A549 (cell line): ENCODE measurements at regions of chr17 and their contacts with region 1.

Region 1: GRCh38 chr17:27760069-27760885 is 40.1 kb downstream of the NOS2 start:
- DNase-seq: peak; percentile 45 to 58
- ATAC-seq: peak; percentile 44 to 82; a peak in 5 of 6 replicates
- H3K4me3 ChIP-seq: no peak overlapping the region
- H3K27ac ChIP-seq: no peak overlapping the region
- H3K4me1 ChIP-seq: no peaks in the 10 kb centered on the region
- CTCF ChIP-seq: peak; percentile 97
- EP300 ChIP-seq: no peak
- POLR2A ChIP-seq: no peak
- RAD21 ChIP-seq: peak; percentile 75 to 80

Region 2: GRCh38 chr17:27654654-27655524 is 105.4 kb before region 1 on chr17:
- CTCF ChIA-PET with region 1: interaction called, 500 read pairs
- POLR2A ChIA-PET with region 1: no interaction called
- DNase-seq: peak; percentile 92 to 94
- ATAC-seq: peak; percentile 79 to 97
- H3K4me3 ChIP-seq: no peak overlapping the region
- H3K27ac ChIP-seq: peak overlapping the region in 1 of 2 experiments; percentile 35; a peak in 1 of 6 replicates
- H3K4me1 ChIP-seq: no peaks in the 10 kb centered on the region
- CTCF ChIP-seq: peak; percentile 100
- EP300 ChIP-seq: no peak
- POLR2A ChIP-seq: no peak
- RAD21 ChIP-seq: peak; percentile 68 to 88

Region 3: GRCh38 chr17:27733773-27734172 is 26.5 kb before region 1 on chr17:
- CTCF ChIA-PET with region 1: interaction called, 23 read pairs
- POLR2A ChIA-PET with region 1: no interaction called
- DNase-seq: peak in 1 of 2 experiments; percentile 14
- ATAC-seq: peak in 1 of 2 experiments; percentile 48; a peak in 1 of 6 replicates
- H3K4me3 ChIP-seq: no peak overlapping the region
- H3K27ac ChIP-seq: no peak overlapping the region
- H3K4me1 ChIP-seq: no peaks in the 10 kb centered on the region
- CTCF ChIP-seq: no peak
- EP300 ChIP-seq: no peak
- POLR2A ChIP-seq: no peak
- RAD21 ChIP-seq: no peak

Region 4: GRCh38 chr17:27771586-27771985 is 11.3 kb after region 1 on chr17:
- CTCF ChIA-PET with region 1: interaction called, 117 read pairs
- POLR2A ChIA-PET with region 1: no interaction called
- DNase-seq: no peak
- ATAC-seq: no peak
- H3K4me3 ChIP-seq: no peak overlapping the region
- H3K27ac ChIP-seq: no peak overlapping the region
- H3K4me1 ChIP-seq: no peaks in the 10 kb centered on the region
- CTCF ChIP-seq: no peak
- EP300 ChIP-seq: no peak
- POLR2A ChIP-seq: no peak
- RAD21 ChIP-seq: no peak

Region 5: DNA sequence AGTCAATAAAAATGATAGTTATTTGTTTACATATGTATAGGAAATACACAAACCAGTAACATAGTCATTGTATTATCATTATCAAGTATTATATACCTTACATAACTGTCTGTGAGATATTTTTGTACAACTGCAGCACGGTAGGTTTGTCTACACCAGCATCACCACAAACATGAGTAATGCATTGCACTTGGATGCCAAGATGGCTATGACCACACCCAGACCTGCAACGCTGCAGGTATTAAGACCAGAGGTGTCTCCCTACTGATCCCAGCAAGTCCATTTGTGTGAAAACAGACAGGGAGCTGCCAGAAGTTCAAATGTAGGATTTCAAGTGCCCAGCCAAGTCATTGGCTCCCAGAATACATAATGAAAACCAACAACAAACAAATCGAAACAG is 74.3 kb after region 1 on chr17:
- CTCF ChIA-PET with region 1: interaction called, 10 read pairs
- POLR2A ChIA-PET with region 1: no interaction called
- DNase-seq: no peak
- ATAC-seq: no peak
- H3K4me3 ChIP-seq: no peak overlapping the region
- H3K27ac ChIP-seq: no peak overlapping the region
- H3K4me1 ChIP-seq: no peaks in the 10 kb centered on the region
- CTCF ChIP-seq: no peak
- EP300 ChIP-seq: no peak
- POLR2A ChIP-seq: no peak
- RAD21 ChIP-seq: no peak

Region 6: GRCh38 chr17:27879987-27880608 is 119.8 kb after region 1 on chr17:
- CTCF ChIA-PET with region 1: interaction called, 427 read pairs
- POLR2A ChIA-PET with region 1: no interaction called
- DNase-seq: peak; percentile 70 to 90
- ATAC-seq: peak; percentile 94 to 98
- H3K4me3 ChIP-seq: no peak overlapping the region
- H3K27ac ChIP-seq: no peak overlapping the region
- H3K4me1 ChIP-seq: no peaks in the 10 kb centered on the region
- CTCF ChIP-seq: peak; percentile 97
- EP300 ChIP-seq: no peak
- POLR2A ChIP-seq: no peak
- RAD21 ChIP-seq: peak; percentile 97 to 98